Endothelial cell of umbilical vein (primary cell): ENCODE measurements at regions of chr3 and their contacts with region 1.

Region 1: GRCh38 chr3:112642912-112643506 is 2.1 kb upstream of the CCDC80 start:
- DNase-seq: peak; percentile 83
- H3K4me3 ChIP-seq: peak overlapping the region in 1 of 3 experiments; percentile 12
- H3K27ac ChIP-seq: no peak overlapping the region
- H3K4me1 ChIP-seq: peaks cover 28% of the 10 kb centered on the region
- H3K27me3 ChIP-seq: no peaks in the 10 kb centered on the region
- CTCF ChIP-seq: peak; percentile 82 to 86
- POLR2A ChIP-seq: no peak

Region 2: GRCh38 chr3:112561731-112562688 is 81.0 kb before region 1 on chr3 and contains the starts of genes ATG3 and SLC35A5:
- CTCF ChIA-PET with region 1: interaction called, 4 read pairs
- POLR2A ChIA-PET with region 1: interaction called, 6 read pairs
- dilution Hi-C with region 1: no loop called
- intact Hi-C with region 1: loop called (anchors 1 kb)
- DNase-seq: peak; percentile 99
- H3K4me3 ChIP-seq: peak within 1 kb of the TSS; percentile 94 to 100 (median 97)
- H3K27ac ChIP-seq: peak within 1 kb of the TSS; percentile 78
- H3K4me1 ChIP-seq: peaks cover 17% of the 10 kb centered on the region
- H3K27me3 ChIP-seq: no peaks in the 10 kb centered on the region
- CTCF ChIP-seq: peak in 1 of 2 donors; percentile 10
- POLR2A ChIP-seq: peak; percentile 89
- total RNA-seq, gene ATG3: 62.4 TPM in 2 replicates
- total RNA-seq, gene SLC35A5: 25.1 and 25.6 TPM in 2 replicates

Region 3: DNA sequence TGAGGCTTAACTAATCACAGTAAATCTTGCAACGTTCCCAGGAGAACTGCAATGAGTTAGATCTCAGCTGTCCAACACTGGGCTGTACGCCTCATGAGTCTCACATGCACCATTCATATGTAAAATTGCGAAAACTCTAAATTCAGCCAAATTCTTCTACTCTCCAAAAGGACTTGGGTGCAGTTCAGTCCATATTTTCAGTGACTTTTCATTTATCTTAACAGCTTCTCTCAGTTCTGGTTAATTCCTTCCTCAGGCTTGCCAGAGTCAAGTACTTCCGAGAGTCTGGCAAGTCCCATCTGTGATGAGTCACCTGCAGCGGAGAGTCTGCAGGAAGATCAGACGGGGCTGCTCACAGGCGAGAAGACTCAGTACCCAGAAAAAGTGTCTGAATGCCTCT is 13.6 kb before region 1 on chr3:
- CTCF ChIA-PET with region 1: interaction called, 11 read pairs
- POLR2A ChIA-PET with region 1: interaction called, 11 read pairs
- dilution Hi-C with region 1: no loop called
- intact Hi-C with region 1: loop called (anchors 1 kb)
- DNase-seq: peak; percentile 76
- H3K4me3 ChIP-seq: no peak overlapping the region
- H3K27ac ChIP-seq: peak overlapping the region; percentile 50
- H3K4me1 ChIP-seq: peaks cover 46% of the 10 kb centered on the region
- H3K27me3 ChIP-seq: no peaks in the 10 kb centered on the region
- CTCF ChIP-seq: no peak
- POLR2A ChIP-seq: no peak

Region 4: GRCh38 chr3:112814266-112814665 is 171.3 kb after region 1 on chr3:
- CTCF ChIA-PET with region 1: interaction called, 36 read pairs
- POLR2A ChIA-PET with region 1: interaction called, 3 read pairs
- dilution Hi-C with region 1: no loop called
- intact Hi-C with region 1: loop called (anchors 1 kb)
- DNase-seq: peak; percentile 67
- H3K4me3 ChIP-seq: no peak overlapping the region
- H3K27ac ChIP-seq: no peak overlapping the region
- H3K4me1 ChIP-seq: no peaks in the 10 kb centered on the region
- H3K27me3 ChIP-seq: peaks cover 0 to 7% of the 10 kb centered on the region in 2 experiments
- CTCF ChIP-seq: peak in 1 of 2 donors; percentile 40
- POLR2A ChIP-seq: no peak

Region 5: GRCh38 chr3:113035387-113035982 is 392.5 kb after region 1 on chr3:
- CTCF ChIA-PET with region 1: interaction called, 18 read pairs
- POLR2A ChIA-PET with region 1: no interaction called
- dilution Hi-C with region 1: no loop called
- intact Hi-C with region 1: loop called (anchors 5 kb)
- DNase-seq: peak; percentile 47
- H3K4me3 ChIP-seq: no peak overlapping the region
- H3K27ac ChIP-seq: no peak overlapping the region
- H3K4me1 ChIP-seq: no peaks in the 10 kb centered on the region
- H3K27me3 ChIP-seq: no peaks in the 10 kb centered on the region
- CTCF ChIP-seq: peak; percentile 73 to 83
- POLR2A ChIP-seq: no peak

Region 6: DNA sequence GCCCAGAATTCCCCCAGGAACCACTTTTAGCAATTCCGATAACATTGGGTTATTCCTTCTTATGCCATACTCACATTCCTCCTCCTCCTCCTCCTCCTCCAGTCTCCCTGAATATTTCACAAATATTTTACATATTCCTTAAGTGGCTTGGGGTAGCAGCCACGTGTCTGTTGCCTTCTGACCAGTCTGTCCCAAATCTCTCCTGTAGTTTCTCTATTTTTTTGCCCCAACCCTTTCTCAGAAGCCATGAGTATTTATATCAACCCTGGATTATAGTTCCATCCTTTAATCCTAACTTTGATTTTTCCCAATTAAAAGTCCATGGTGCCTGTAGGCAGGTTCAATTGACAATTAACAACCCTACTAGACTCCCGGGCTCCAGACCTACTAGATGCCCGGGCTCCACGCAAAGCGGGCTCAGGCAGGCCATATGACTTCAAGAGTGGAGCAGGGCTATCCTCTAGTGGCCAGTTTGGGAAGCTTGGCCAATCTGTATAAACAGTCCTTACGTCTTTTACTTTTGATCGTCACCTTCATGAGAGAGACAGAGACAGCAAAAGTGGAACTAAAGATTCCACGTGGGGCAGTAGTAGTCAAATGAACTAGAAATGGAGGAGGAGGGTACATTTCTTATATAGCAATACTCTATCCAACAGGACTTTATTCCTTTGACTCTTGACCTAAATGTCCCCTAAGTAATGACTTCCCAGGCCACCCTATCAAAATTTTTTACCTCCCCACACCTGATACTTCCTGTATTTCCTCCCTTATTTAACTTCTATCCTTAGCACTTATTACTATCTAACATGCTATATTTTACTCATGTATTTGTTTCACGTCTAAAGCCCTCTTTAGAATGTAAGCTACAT is 983.7 kb after region 1 on chr3:
- CTCF ChIA-PET with region 1: no interaction called
- POLR2A ChIA-PET with region 1: no interaction called
- dilution Hi-C with region 1: no loop called
- intact Hi-C with region 1: loop called (anchors 5 kb)
- DNase-seq: peak; percentile 64
- H3K4me3 ChIP-seq: no peak overlapping the region
- H3K27ac ChIP-seq: no peak overlapping the region
- H3K4me1 ChIP-seq: peaks cover 4% of the 10 kb centered on the region
- H3K27me3 ChIP-seq: peaks cover 17 to 27% of the 10 kb centered on the region in 2 experiments
- CTCF ChIP-seq: peak; percentile 84 to 90
- POLR2A ChIP-seq: no peak